ENCODE measurements at regions of chr1 and their contacts with region 1.

Region 1: GRCh38 chr1:230708631-230709580 is 5.0 kb downstream of the AGT start:
- DNase-seq: peak; percentile 94
- ATAC-seq: peak; percentile 67
- H3K4me3 ChIP-seq: peak overlapping the region; percentile 83 to 92 (median 90)
- H3K27ac ChIP-seq: peak overlapping the region; percentile 93
- H3K4me1 ChIP-seq: peaks cover 83% of the 10 kb centered on the region
- H3K27me3 ChIP-seq: peaks cover 0 to 2% of the 10 kb centered on the region in 2 experiments; a peak in 1 of 5 replicates
- CTCF ChIP-seq: peak; percentile 10; the same call in 1 of the 2 replicates
- EP300 ChIP-seq: peak in 1 of 2 experiments; percentile 93; a peak in 2 of 4 replicates
- POLR2A ChIP-seq: peak in 1 of 2 experiments; percentile 37; a peak in 1 of 4 replicates
- RAD21 ChIP-seq: peak; percentile 41; the same call in 1 of the 2 replicates

Region 2: GRCh38 chr1:230642263-230642959 is 66.5 kb before region 1 on chr1 and contains the start of gene COG2:
- CTCF ChIA-PET with region 1: no interaction called
- POLR2A ChIA-PET with region 1: interaction called, 84 read pairs
- in situ Hi-C with region 1: loop called (anchors 5 kb)
- intact Hi-C with region 1: loop called (anchors 1 kb)
- DNase-seq: peak; percentile 77
- ATAC-seq: peak; percentile 95
- H3K4me3 ChIP-seq: peak within 1 kb of the TSS; percentile 85 to 96 (median 88)
- H3K27ac ChIP-seq: peak within 1 kb of the TSS; percentile 86
- H3K4me1 ChIP-seq: peaks cover 75% of the 10 kb centered on the region
- H3K27me3 ChIP-seq: no peaks in the 10 kb centered on the region; a peak in 1 of 5 replicates
- CTCF ChIP-seq: peak; percentile 96
- EP300 ChIP-seq: no peak; a peak in 1 of 4 replicates
- POLR2A ChIP-seq: peak; percentile 67 to 88
- RAD21 ChIP-seq: peak; percentile 93
- total RNA-seq, gene COG2: 36.3 and 51.3 TPM in 2 replicates

Region 3: GRCh38 chr1:230728710-230729392 is 19.9 kb after region 1 on chr1:
- CTCF ChIA-PET with region 1: no interaction called
- POLR2A ChIA-PET with region 1: interaction called, 110 read pairs
- in situ Hi-C with region 1: no loop called
- intact Hi-C with region 1: loop called (anchors 2 kb)
- DNase-seq: peak; percentile 95
- ATAC-seq: peak; percentile 94
- H3K4me3 ChIP-seq: peak overlapping the region; percentile 3 to 63 (median 36); a peak in 4 of 6 replicates
- H3K27ac ChIP-seq: peak overlapping the region; percentile 94
- H3K4me1 ChIP-seq: peaks cover 94% of the 10 kb centered on the region
- H3K27me3 ChIP-seq: no peaks in the 10 kb centered on the region
- CTCF ChIP-seq: peak; percentile 38
- EP300 ChIP-seq: peak; percentile 89 to 96
- POLR2A ChIP-seq: peak in 1 of 2 experiments; percentile 60; a peak in 2 of 4 replicates
- RAD21 ChIP-seq: peak; percentile 54

Region 4: GRCh38 chr1:230753586-230754251 is 44.8 kb after region 1 on chr1:
- CTCF ChIA-PET with region 1: no interaction called
- POLR2A ChIA-PET with region 1: interaction called, 46 read pairs
- in situ Hi-C with region 1: no loop called
- intact Hi-C with region 1: loop called (anchors 5 kb)
- DNase-seq: peak; percentile 30
- ATAC-seq: peak; percentile 57
- H3K4me3 ChIP-seq: peak overlapping the region; percentile 35 to 68 (median 57)
- H3K27ac ChIP-seq: peak overlapping the region; percentile 40
- H3K4me1 ChIP-seq: peaks cover 88% of the 10 kb centered on the region
- H3K27me3 ChIP-seq: no peaks in the 10 kb centered on the region
- CTCF ChIP-seq: no peak
- EP300 ChIP-seq: no peak
- POLR2A ChIP-seq: no peak
- RAD21 ChIP-seq: no peak

Region 5: GRCh38 chr1:230772457-230773395 is 63.8 kb after region 1 on chr1:
- CTCF ChIA-PET with region 1: no interaction called
- POLR2A ChIA-PET with region 1: interaction called, 33 read pairs
- in situ Hi-C with region 1: no loop called
- intact Hi-C with region 1: loop called (anchors 1 kb)
- DNase-seq: peak; percentile 56
- ATAC-seq: peak; percentile 75
- H3K4me3 ChIP-seq: no peak overlapping the region; a peak in 1 of 6 replicates
- H3K27ac ChIP-seq: no peak overlapping the region
- H3K4me1 ChIP-seq: peaks cover 34% of the 10 kb centered on the region
- H3K27me3 ChIP-seq: peaks cover 1 to 7% of the 10 kb centered on the region in 2 experiments; a peak in 3 of 5 replicates
- CTCF ChIP-seq: peak; percentile 94
- EP300 ChIP-seq: no peak
- POLR2A ChIP-seq: no peak
- RAD21 ChIP-seq: peak; percentile 89

Region 6: GRCh38 chr1:231557898-231558707 is 849.2 kb after region 1 on chr1:
- CTCF ChIA-PET with region 1: no interaction called
- POLR2A ChIA-PET with region 1: no interaction called
- in situ Hi-C with region 1: no loop called
- intact Hi-C with region 1: no loop called
- DNase-seq: no peak
- ATAC-seq: no peak
- H3K4me3 ChIP-seq: no peak overlapping the region
- H3K27ac ChIP-seq: no peak overlapping the region
- H3K4me1 ChIP-seq: peaks cover 3% of the 10 kb centered on the region; the same call in 1 of the 2 replicates
- H3K27me3 ChIP-seq: no peaks in the 10 kb centered on the region
- CTCF ChIP-seq: no peak
- EP300 ChIP-seq: no peak
- POLR2A ChIP-seq: no peak
- RAD21 ChIP-seq: no peak

Region 7: DNA sequence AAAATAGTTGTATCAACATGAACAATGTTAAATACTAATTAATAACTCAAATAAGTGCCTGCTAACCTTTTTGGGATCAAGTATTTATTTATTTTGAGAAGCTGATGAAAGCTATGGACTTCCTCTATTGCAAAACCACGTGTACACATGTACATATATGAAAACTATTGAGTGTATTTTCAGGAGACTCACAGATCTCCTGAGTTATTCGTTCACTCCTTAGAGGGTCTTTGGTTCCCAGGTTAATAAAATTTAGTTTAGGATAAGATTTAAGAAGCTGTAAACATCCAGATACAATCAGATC is 1048.1 kb after region 1 on chr1:
- CTCF ChIA-PET with region 1: no interaction called
- POLR2A ChIA-PET with region 1: no interaction called
- in situ Hi-C with region 1: no loop called
- intact Hi-C with region 1: no loop called
- DNase-seq: no peak
- ATAC-seq: peak; percentile 40
- H3K4me3 ChIP-seq: no peak overlapping the region
- H3K27ac ChIP-seq: no peak overlapping the region
- H3K4me1 ChIP-seq: no peaks in the 10 kb centered on the region
- H3K27me3 ChIP-seq: no peaks in the 10 kb centered on the region
- CTCF ChIP-seq: no peak
- EP300 ChIP-seq: no peak
- POLR2A ChIP-seq: no peak
- RAD21 ChIP-seq: no peak